ENCODE measurements at regions of chr10 and their contacts with region 1.

Region 1: DNA sequence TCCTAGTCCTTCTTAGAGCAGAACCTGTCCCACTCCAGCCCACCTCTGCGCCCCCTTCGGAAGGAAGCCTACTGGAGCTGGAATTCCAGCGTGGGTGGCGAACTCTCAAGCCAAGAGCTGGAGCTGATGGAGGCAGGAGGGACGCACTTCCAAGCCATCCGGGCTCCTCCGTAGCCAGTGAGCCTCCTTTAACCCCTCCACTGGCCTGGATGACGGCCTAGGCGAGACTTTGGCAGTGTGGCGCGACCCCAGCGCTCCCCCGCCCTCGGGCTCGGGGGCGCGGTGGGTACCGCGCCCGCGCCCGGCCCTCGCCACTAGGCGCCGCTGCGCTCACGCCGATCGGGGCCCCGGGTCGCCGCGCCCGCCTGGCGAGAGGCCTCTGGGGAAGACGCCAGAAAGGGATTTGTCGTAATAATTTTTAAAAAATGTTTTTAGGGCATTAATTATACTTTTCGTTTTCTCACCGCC is 5.1 kb upstream of the EMX2 start:
- DNase-seq: no peak
- ATAC-seq: peak; percentile 69

Region 2: DNA sequence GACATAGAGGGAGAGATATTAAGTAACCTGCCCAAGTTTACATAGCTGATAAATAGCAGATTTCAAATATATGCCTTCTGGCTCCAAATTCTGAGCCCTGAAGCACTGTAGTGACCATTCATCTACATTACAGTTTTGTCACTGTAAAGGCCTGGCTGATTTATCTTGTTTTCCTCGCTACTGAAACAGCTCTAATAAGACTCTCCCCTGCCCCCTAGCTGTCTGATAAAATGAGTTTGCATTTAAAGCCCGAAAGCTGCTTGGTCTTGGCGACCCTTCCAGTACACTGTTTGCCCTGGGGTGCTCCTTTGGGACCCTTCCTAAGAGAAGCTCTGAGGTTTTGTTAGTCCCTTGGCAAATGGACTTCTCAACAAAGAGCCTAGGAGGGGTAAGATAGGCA is 569.0 kb after region 1 on chr10:
- intact Hi-C with region 1: loop called (anchors 10 kb)
- DNase-seq: no peak
- ATAC-seq: no peak

Region 3: DNA sequence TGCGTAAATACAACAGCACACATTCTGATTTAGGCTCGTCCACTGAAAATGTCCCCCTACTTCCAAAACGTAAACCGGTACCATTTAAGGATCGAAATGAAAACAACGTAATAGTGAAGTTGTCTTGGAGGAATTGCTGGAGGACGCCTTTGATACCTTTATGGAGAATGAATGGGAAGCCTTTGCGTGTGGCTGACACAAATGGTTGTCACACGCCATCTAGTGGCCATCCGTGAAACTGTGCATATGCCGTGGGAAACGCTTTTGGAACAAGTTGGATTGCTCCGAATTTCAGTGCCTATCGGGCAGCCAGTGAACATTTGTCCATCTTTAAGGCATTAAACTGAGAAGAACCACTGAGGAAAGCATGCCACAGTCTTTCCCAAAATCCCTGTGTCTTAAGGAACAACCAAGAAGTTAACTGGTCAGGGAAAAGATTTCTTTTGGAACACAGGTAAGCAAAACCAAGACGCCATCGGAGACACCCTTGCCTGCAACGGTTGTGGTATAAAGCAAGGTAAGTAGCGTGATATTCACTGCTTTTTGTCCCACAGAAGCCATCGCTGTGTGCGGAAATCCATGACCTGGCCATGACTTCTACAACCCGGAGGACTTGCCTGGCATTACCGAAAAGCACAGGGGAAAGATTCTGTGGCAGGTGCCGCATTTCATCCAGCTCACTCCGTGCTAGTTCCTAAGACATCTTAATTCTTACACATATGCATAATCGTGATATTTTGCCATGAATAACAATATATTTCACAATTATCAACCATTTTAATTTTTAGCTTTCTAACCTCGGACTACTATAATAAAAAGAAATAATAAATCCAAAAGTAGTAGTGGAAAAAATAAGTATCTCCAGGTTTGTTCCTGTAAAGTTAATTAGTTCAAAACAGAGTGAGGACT is 704.0 kb after region 1 on chr10:
- intact Hi-C with region 1: loop called (anchors 2 kb)
- DNase-seq: peak; percentile 75
- ATAC-seq: peak; percentile 67

Measured in Right ventricle myocardium inferior (tissue), 1 donor.